GM10248 (cell line): ENCODE measurements at regions of chr2 and their contacts with region 1.

Region 1: DNA sequence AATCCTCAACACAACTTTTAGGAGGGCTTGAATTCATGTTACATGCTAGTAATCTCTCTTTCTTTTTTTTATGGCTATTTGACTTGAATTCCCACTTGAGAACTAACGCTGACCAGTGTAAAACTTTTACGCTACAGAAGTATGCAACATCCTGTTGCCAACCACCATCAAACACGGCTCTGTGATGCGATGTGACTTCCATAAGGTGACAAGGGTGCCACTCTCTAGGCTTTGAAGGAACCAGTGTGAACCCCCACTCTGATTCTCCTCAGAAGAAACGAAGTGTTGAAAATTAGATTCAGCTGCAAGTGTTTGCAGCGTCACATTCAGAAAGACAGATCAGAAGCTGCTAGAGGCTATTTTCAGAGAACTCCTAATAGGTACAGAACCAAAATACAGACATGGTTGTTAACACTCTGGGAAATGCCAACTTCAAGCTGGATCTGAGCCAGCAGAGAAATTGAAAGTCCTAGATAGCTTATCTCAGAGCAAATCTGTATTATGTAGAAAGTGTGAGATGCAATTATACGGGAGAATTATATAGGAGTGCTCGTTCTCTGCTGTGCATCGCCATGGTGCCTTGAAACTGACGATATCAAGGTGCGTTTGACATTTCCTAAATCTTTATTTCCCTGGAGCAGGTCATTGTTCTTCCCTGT is 271.2 kb downstream of the LPIN1 start:
- DNase-seq: no peak
- CTCF ChIP-seq: no peak

Region 2: DNA sequence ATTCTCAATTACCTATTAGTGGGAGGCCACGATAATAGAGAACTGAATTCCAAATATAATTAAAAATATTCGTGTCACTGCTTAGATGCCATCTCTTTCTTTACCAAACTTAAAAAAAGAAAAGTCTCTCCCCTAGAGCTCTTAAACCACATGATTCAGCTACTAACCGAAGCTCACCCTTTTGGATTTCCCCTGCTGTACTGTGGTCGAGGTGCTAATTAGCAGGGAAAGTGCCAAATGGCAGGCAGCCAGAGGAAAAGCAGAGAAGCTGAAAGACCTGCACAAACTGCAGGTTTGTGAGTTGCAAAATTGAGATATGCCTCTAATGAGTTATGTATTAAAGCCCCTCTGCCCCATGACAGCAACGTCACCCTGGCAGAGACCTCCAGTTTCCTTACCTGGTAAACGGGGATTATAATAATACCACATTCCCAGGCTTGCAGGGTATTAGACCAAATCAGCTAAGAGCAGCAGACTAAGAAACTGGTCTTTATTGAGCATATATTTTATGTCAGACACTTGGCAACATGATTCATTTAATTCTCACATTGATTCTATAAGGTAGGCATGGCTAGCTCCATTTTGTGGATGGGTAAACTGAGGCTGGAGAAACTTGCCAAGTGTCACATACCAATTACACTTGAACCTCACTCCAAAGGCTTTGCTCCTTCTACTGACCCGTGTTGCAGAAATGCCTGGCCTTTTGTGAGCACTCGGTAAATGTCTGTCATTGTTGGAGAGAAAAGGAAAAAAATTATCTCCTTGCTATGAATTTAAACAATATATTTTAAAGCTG is 11.5 kb before region 1 on chr2:
- CTCF ChIA-PET with region 1: interaction called, 16 read pairs
- POLR2A ChIA-PET with region 1: no interaction called
- DNase-seq: peak; percentile 60
- CTCF ChIP-seq: no peak